Panc1 (cell line): ENCODE measurements at regions of chr6 and their contacts with region 1.

Region 1: GRCh38 chr6:31827286-31828079 is at the start of gene HSPA1B:
- DNase-seq: peak; percentile 98
- ATAC-seq: peak; percentile 92
- H3K4me3 ChIP-seq: peak within 1 kb of the TSS; percentile 55 to 72
- H3K27ac ChIP-seq: peak within 1 kb of the TSS; percentile 100
- H3K4me1 ChIP-seq: peaks cover 31% of the 10 kb centered on the region
- H3K27me3 ChIP-seq: no peaks in the 10 kb centered on the region
- CTCF ChIP-seq: no peak
- total RNA-seq, gene HSPA1B: 147 TPM

Region 2: DNA sequence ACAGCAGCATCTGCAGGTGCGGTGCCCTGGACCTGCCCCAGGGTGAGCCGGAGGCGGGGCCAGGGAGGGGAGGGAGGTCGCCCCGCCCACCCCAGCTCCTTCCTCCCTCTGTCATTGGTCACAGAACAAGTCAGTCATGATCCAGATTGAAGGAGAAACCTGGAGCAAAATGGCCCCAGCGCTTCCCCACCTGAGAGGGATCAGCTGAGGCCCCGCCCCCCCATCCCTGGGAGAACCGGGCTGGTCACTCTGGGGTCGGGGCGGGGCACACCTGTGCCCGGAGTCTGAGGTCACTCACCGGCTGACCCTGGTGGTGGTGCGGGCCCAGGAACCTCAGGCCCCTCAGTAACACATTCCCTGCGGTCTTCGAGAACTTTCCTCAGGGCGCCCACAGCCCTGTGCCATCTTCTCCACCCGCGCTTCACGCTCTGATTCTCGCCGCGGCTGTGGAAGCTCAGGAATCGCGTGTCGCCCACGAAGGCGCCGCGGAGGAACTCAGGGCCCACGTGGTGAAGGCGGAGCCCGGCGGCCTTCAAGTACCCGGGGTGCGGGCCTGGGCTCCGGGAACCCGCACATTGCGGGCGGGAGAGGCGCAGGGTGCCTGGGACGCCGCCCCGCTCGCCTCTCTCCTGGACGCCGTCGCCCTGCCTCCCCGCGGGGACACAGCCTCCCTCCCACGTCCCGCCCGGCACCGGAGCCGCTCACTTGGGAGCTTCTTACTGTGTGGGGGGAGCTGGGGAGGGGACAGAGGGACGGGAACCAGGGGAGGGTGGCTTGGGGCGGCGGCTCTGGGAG is 519.2 kb before region 1 on chr6:
- CTCF ChIA-PET with region 1: no interaction called
- POLR2A ChIA-PET with region 1: no interaction called
- in situ Hi-C with region 1: no loop called
- intact Hi-C with region 1: no loop called
- DNase-seq: no peak
- ATAC-seq: peak; percentile 54
- H3K4me3 ChIP-seq: peak overlapping the region; percentile 5 to 23; a peak in 2 of 4 replicates
- H3K27ac ChIP-seq: no peak overlapping the region
- H3K4me1 ChIP-seq: no peaks in the 10 kb centered on the region
- H3K27me3 ChIP-seq: peaks cover 6% of the 10 kb centered on the region
- CTCF ChIP-seq: no peak

Region 3: GRCh38 chr6:31666337-31666965 is 161.0 kb before region 1 on chr6:
- CTCF ChIA-PET with region 1: no interaction called
- POLR2A ChIA-PET with region 1: no interaction called
- in situ Hi-C with region 1: no loop called
- intact Hi-C with region 1: no loop called
- DNase-seq: no peak
- ATAC-seq: no peak
- H3K4me3 ChIP-seq: peak overlapping the region; percentile 76 to 94
- H3K27ac ChIP-seq: peak overlapping the region; percentile 96
- H3K4me1 ChIP-seq: peaks cover 14% of the 10 kb centered on the region
- H3K27me3 ChIP-seq: no peaks in the 10 kb centered on the region
- CTCF ChIP-seq: no peak

Region 4: DNA sequence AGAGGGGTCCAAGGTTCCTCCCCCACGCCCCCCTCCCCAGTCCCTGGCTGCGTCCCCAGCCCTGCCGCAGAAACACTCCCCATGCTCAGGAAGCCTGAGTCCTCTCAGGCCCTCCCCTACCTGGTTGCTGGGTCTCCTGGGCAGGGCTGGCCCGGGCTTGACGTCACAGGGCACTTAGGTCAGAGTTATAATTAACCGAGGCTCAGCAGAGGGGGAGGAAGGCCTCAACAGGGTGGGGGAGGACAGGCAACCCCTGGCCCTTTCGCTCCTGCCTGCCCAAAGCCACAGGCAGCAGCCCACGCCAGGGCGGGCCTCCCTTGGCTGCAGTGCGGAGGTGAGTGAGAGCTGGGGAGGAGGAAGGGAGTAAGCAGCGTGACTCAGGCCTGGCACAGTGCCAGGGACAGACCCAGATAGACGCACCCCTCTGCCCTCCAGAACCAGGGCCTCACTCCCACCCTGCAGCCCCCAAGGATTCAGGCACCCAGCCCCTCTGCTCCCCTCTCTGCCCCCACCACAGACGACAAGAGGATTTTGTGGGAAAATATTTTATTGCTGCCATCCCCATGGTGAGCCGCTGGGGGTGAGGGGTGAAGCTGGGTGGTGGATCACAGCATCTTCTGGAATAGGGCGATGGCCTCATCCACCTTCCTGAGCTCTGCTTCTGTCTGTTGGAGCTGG is 50.4 kb before region 1 on chr6 and contains the start of gene VWA7:
- CTCF ChIA-PET with region 1: no interaction called
- POLR2A ChIA-PET with region 1: no interaction called
- in situ Hi-C with region 1: no loop called
- intact Hi-C with region 1: loop called (anchors 10 kb)
- DNase-seq: no peak
- ATAC-seq: peak; percentile 79
- H3K4me3 ChIP-seq: peak within 1 kb of the TSS in 1 of 2 experiments; percentile 3; a peak in 1 of 4 replicates
- H3K27ac ChIP-seq: peak within 1 kb of the TSS; percentile 74
- H3K4me1 ChIP-seq: peaks cover 31% of the 10 kb centered on the region
- H3K27me3 ChIP-seq: no peaks in the 10 kb centered on the region
- CTCF ChIP-seq: no peak
- total RNA-seq, gene VWA7: 4.3 TPM

Region 5: DNA sequence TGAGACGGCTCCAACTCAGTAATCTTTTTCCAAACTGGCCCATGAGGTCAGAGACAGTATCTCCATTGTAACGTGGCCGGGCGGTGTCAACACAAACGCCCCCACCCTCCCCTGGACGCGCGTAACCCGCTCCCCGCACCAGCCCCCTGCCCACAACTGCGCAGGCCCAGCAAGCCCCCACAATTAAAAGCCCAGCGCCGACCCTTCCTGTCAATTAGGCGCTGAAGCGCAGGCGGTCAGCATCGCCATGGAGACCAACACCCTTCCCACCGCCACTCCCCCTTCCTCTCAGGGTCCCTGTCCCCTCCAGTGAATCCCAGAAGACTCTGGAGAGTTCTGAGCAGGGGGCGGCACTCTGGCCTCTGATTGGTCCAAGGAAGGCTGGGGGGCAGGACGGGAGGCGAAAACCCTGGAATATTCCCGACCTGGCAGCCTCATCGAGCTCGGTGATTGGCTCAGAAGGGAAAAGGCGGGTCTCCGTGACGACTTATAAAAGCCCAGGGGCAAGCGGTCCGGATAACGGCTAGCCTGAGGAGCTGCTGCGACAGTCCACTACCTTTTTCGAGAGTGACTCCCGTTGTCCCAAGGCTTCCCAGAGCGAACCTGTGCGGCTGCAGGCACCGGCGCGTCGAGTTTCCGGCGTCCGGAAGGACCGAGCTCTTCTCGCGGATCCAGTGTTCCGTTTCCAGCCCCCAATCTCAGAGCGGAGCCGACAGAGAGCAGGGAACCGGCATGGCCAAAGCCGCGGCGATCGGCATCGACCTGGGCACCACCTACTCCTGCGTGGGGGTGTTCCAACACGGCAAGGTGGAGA is 12.3 kb before region 1 on chr6 and contains the starts of genes HSPA1A and HSPA1L:
- CTCF ChIA-PET with region 1: interaction called, 10 read pairs
- POLR2A ChIA-PET with region 1: interaction called, 6 read pairs
- in situ Hi-C with region 1: no loop called
- intact Hi-C with region 1: no loop called
- DNase-seq: peak; percentile 96
- ATAC-seq: peak; percentile 86
- H3K4me3 ChIP-seq: peak within 1 kb of the TSS; percentile 56 to 70
- H3K27ac ChIP-seq: peak within 1 kb of the TSS; percentile 87
- H3K4me1 ChIP-seq: peaks cover 13% of the 10 kb centered on the region
- H3K27me3 ChIP-seq: no peaks in the 10 kb centered on the region
- CTCF ChIP-seq: no peak
- total RNA-seq, gene HSPA1A: 169 TPM
- total RNA-seq, gene HSPA1L: 2.8 TPM

Region 6: GRCh38 chr6:31842056-31842455 is 14.6 kb after region 1 on chr6:
- CTCF ChIA-PET with region 1: interaction called, 13 read pairs
- POLR2A ChIA-PET with region 1: interaction called, 3 read pairs
- in situ Hi-C with region 1: no loop called
- intact Hi-C with region 1: no loop called
- DNase-seq: no peak
- ATAC-seq: peak; percentile 20
- H3K4me3 ChIP-seq: no peak overlapping the region
- H3K27ac ChIP-seq: no peak overlapping the region
- H3K4me1 ChIP-seq: peaks cover 28% of the 10 kb centered on the region
- H3K27me3 ChIP-seq: no peaks in the 10 kb centered on the region
- CTCF ChIP-seq: no peak